MCF 10A (cell line): ENCODE measurements at regions of chr11 and their contacts with region 1.

Region 1: DNA sequence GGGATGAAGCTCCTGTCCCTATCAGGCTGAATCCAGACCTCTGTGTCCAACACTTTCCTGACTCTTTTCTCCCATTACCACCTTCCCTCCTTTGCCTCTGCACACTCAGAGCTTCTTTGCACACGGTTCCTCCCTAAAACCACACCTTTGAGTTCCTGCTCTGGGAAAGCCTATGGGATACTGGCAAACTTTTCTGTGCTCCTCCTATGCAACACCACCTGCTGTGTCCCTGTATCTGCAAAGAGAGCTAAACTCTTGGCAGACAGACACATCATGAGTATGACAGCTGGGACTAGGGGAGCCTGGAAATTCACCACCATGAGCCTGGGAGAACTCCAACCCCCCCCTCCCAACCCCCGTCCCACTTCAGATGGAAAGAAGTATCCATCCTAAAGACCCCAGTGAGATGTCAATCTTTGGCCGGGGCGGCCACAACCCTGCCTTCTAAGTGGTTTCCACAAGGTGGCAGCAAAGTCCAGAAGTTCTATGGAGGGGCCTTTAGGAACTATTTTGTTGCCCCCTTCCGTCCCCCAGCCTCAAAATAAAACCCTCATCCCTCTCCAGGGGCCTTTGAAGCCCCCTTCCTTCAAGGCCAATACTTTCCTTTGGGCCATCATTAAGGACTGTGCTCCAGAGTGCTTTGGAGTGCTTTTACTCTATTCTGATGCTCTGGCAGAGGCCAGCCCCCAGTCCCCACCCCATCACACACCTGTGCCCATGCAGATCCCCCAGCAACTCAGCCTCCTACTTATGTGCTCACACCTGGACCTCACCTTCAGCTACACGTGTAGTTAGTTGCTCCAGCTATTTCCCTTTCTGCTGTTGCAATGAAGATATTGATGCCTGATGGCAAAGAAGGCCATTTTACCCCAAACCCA is 19.4 kb downstream of the HTR3A start:
- DNase-seq: peak; percentile 36
- H3K4me3 Mint-ChIP-seq: no peak overlapping the region
- H3K27ac Mint-ChIP-seq: no peak overlapping the region
- H3K4me1 Mint-ChIP-seq: no peaks in the 10 kb centered on the region
- H3K27me3 Mint-ChIP-seq: peaks cover 74% of the 10 kb centered on the region
- CTCF ChIP-seq: peak; percentile 87

Region 2: GRCh38 chr11:113896156-113896879 is 98.0 kb before region 1 on chr11:
- CTCF ChIA-PET with region 1: interaction called, 9 read pairs
- POLR2A ChIA-PET with region 1: no interaction called
- intact Hi-C with region 1: loop called (anchors 5 kb)
- DNase-seq: peak; percentile 42
- H3K4me3 Mint-ChIP-seq: no peak overlapping the region
- H3K27ac Mint-ChIP-seq: no peak overlapping the region
- H3K4me1 Mint-ChIP-seq: no peaks in the 10 kb centered on the region
- H3K27me3 Mint-ChIP-seq: peaks cover 8% of the 10 kb centered on the region
- CTCF ChIP-seq: peak; percentile 68

Region 3: GRCh38 chr11:113952588-113952987 is 41.7 kb before region 1 on chr11:
- CTCF ChIA-PET with region 1: no interaction called
- POLR2A ChIA-PET with region 1: no interaction called
- intact Hi-C with region 1: no loop called
- DNase-seq: no peak
- H3K4me3 Mint-ChIP-seq: no peak overlapping the region
- H3K27ac Mint-ChIP-seq: no peak overlapping the region
- H3K4me1 Mint-ChIP-seq: no peaks in the 10 kb centered on the region
- H3K27me3 Mint-ChIP-seq: peaks cover 82% of the 10 kb centered on the region
- CTCF ChIP-seq: no peak

Region 4: GRCh38 chr11:113974741-113975470 is 19.4 kb before region 1 on chr11 and contains the start of gene HTR3A:
- CTCF ChIA-PET with region 1: interaction called, 10 read pairs
- POLR2A ChIA-PET with region 1: no interaction called
- intact Hi-C with region 1: no loop called
- DNase-seq: peak; percentile 75
- H3K4me3 Mint-ChIP-seq: no peak within 1 kb of the TSS
- H3K27ac Mint-ChIP-seq: no peak within 1 kb of the TSS
- H3K4me1 Mint-ChIP-seq: peaks cover 10% of the 10 kb centered on the region
- H3K27me3 Mint-ChIP-seq: peaks cover 80% of the 10 kb centered on the region
- CTCF ChIP-seq: no peak
- total RNA-seq, gene HTR3A: not detected in 2 replicates

Region 5: GRCh38 chr11:114052160-114052559 is 57.8 kb after region 1 on chr11:
- CTCF ChIA-PET with region 1: no interaction called
- POLR2A ChIA-PET with region 1: no interaction called
- intact Hi-C with region 1: no loop called
- DNase-seq: no peak
- H3K4me3 Mint-ChIP-seq: no peak overlapping the region
- H3K27ac Mint-ChIP-seq: peak overlapping the region; percentile 63
- H3K4me1 Mint-ChIP-seq: peaks cover 9% of the 10 kb centered on the region
- H3K27me3 Mint-ChIP-seq: no peaks in the 10 kb centered on the region
- CTCF ChIP-seq: no peak

Region 6: GRCh38 chr11:114762408-114762807 is 768.1 kb after region 1 on chr11:
- CTCF ChIA-PET with region 1: interaction called, 10 read pairs
- POLR2A ChIA-PET with region 1: no interaction called
- intact Hi-C with region 1: no loop called
- DNase-seq: peak; percentile 41
- H3K4me3 Mint-ChIP-seq: no peak overlapping the region
- H3K27ac Mint-ChIP-seq: no peak overlapping the region
- H3K4me1 Mint-ChIP-seq: no peaks in the 10 kb centered on the region
- H3K27me3 Mint-ChIP-seq: peaks cover 48% of the 10 kb centered on the region
- CTCF ChIP-seq: peak; percentile 7